Right lobe of liver (tissue), 6 donors: ENCODE measurements at regions of chr21 and their contacts with region 1.

Region 1: DNA sequence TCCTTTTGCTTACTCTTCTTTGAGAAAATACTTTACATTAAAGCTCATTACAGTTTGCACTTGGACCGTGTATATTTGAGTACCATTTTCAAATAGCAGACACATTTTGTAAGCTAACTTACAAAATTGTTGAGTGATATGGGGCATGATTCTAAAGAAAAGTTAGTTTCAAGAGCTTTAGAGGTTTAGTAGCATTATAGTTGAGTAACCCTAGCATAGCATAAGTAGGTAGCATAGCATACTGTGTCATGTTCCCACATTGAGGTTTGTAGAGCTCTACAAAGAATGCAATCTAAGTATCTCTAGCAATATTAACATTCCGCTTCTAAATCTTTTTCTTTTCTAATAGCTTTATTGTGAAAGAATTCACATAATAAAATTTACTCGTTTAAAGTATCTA is 92.0 kb downstream of the ITSN1 start:
- DNase-seq: no peak
- ATAC-seq: no peak
- H3K4me3 ChIP-seq: no peak overlapping the region
- H3K27ac ChIP-seq: no peak overlapping the region
- H3K4me1 ChIP-seq: no peaks in the 10 kb centered on the region
- H3K27me3 ChIP-seq: no peaks in the 10 kb centered on the region
- CTCF ChIP-seq: no peak
- POLR2A ChIP-seq: no peak

Region 2: GRCh38 chr21:33670076-33670978 is 64.0 kb before region 1 on chr21:
- intact Hi-C with region 1: loop called in 1 of 2 experiments (anchors 10 kb)
- DNase-seq: no peak
- ATAC-seq: peak in 1 of 4 donors; percentile 13
- H3K4me3 ChIP-seq: no peak overlapping the region
- H3K27ac ChIP-seq: no peak overlapping the region
- H3K4me1 ChIP-seq: peaks cover 0 to 35% (median 14%) of the 10 kb centered on the region in 4 donors
- H3K27me3 ChIP-seq: no peaks in the 10 kb centered on the region
- CTCF ChIP-seq: no peak
- POLR2A ChIP-seq: no peak